GM12878 (cell line): ENCODE measurements at regions of chr11 and their contacts with region 1.

Region 1: GRCh38 chr11:95150946-95151684 is 61.5 kb downstream of the ENDOD1 start:
- DNase-seq: peak; percentile 77
- ATAC-seq: peak; percentile 89
- H3K4me3 ChIP-seq: peak overlapping the region; percentile 80
- H3K27ac ChIP-seq: peak overlapping the region; percentile 56
- H3K4me1 ChIP-seq: peaks cover 2% of the 10 kb centered on the region; the same call in 1 of the 2 replicates
- H3K27me3 ChIP-seq: no peaks in the 10 kb centered on the region
- CTCF ChIP-seq: peak; percentile 79 to 97 (median 87)
- EP300 ChIP-seq: no peak
- POLR2A ChIP-seq: peak; percentile 75
- RAD21 ChIP-seq: peak; percentile 38; the same call in 1 of the 2 replicates

Region 2: GRCh38 chr11:95028357-95028756 is 122.8 kb before region 1 on chr11:
- CTCF ChIA-PET with region 1: no interaction called
- POLR2A ChIA-PET with region 1: no interaction called
- RAD21 ChIA-PET with region 1: no interaction called
- SMC1A ChIA-PET with region 1: no interaction called
- in situ Hi-C with region 1: no loop called
- intact Hi-C with region 1: no loop called
- DNase-seq: no peak
- ATAC-seq: no peak
- H3K4me3 ChIP-seq: no peak overlapping the region
- H3K27ac ChIP-seq: no peak overlapping the region
- H3K4me1 ChIP-seq: no peaks in the 10 kb centered on the region
- H3K27me3 ChIP-seq: no peaks in the 10 kb centered on the region; a peak in 2 of 4 replicates
- CTCF ChIP-seq: no peak
- EP300 ChIP-seq: no peak
- POLR2A ChIP-seq: no peak
- RAD21 ChIP-seq: no peak

Region 3: DNA sequence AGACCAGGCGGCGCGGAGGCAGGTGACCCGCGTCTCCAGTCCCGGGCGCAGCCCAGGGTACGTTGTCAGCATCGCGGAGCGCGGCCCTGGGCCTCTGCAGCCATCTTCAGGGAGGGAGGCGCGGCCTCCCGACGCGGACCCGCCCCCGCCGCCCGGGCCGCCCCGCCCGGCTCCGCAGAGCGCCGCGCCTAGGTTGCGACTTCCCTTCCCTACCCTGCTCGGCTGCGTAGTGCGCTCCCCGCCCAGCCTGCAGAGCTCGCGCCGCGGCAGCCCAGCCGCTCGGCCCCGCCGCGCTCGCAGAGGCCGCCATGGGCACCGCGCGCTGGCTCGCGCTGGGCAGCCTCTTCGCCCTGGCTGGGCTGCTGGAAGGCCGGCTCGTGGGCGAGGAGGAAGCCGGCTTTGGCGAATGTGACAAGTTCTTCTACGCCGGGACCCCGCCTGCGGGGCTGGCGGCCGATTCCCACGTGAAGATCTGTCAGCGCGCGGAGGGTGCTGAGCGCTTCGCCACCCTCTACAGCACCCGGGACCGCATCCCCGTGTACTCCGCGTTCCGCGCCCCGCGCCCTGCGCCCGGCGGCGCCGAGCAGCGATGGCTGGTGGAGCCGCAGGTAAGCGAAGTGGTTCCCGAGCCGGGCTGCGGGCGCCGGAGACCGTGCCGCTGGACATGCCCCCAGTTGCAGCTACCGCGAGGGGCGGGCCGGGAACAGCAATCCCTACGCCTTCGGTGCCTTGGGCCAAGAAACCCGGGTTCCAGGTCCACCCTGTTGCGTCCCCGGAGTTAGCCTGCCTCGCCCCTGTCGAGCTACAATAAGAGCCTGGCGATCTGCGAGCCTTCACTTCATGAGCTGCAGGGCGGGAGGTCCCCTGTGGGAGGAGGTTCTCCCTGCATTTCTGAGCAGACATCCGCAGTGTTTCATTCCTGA is 61.2 kb before region 1 on chr11 and contains the start of gene ENDOD1:
- CTCF ChIA-PET with region 1: interaction called, 47 read pairs
- POLR2A ChIA-PET with region 1: interaction called, 4 read pairs
- RAD21 ChIA-PET with region 1: interaction called, 86 read pairs
- SMC1A ChIA-PET with region 1: interaction called, 9 read pairs
- in situ Hi-C with region 1: no loop called
- intact Hi-C with region 1: loop called (anchors 2 kb)
- DNase-seq: no peak
- ATAC-seq: peak; percentile 93
- H3K4me3 ChIP-seq: peak within 1 kb of the TSS; percentile 94
- H3K27ac ChIP-seq: peak within 1 kb of the TSS; percentile 84
- H3K4me1 ChIP-seq: peaks cover 27% of the 10 kb centered on the region
- H3K27me3 ChIP-seq: no peaks in the 10 kb centered on the region
- CTCF ChIP-seq: peak in 1 of 3 experiments; percentile 9; a peak in 1 of 6 replicates
- EP300 ChIP-seq: no peak
- POLR2A ChIP-seq: peak; percentile 93
- RAD21 ChIP-seq: no peak
- polyA plus RNA-seq, gene ENDOD1: 6.0 to 6.4 TPM

Region 4: DNA sequence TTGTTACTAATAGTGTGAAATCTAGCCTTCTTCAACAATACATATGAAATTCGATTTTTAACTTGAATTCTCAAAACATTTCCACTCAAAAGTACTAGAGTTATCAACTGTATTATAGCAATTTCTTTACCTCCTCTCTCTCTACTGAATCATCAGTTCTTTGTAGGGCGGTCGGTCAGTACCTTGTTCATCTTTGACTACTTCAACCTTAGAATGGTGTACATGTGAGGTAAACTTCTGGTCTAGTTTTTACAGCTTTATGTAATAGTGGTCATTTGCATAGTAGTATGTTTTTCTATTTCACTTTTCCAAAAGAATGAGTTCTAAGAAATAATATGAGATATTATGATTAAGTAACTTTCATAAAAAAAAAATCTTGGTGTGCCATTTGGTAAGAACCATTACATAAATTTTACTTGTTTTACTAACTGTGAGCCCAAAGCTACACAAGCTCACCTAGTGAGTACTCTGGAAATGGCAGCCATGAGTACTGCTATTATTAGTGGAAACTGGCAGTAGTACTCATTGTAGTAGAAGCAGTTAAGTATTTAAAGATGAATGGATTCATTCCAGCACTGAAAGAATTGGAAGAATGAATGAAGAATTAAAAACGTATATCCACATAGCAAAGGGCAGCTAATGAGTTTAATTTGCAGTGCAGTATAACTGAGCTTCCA is 49.8 kb after region 1 on chr11:
- CTCF ChIA-PET with region 1: interaction called, 5 read pairs
- POLR2A ChIA-PET with region 1: no interaction called
- RAD21 ChIA-PET with region 1: interaction called, 3 read pairs
- SMC1A ChIA-PET with region 1: interaction called, 13 read pairs
- in situ Hi-C with region 1: no loop called
- intact Hi-C with region 1: no loop called
- DNase-seq: no peak
- ATAC-seq: 0 out of 3 replicates have a peak, but pooled peaks have one; percentile 24
- H3K4me3 ChIP-seq: no peak overlapping the region
- H3K27ac ChIP-seq: no peak overlapping the region
- H3K4me1 ChIP-seq: no peaks in the 10 kb centered on the region
- H3K27me3 ChIP-seq: no peaks in the 10 kb centered on the region; a peak in 1 of 4 replicates
- CTCF ChIP-seq: no peak
- EP300 ChIP-seq: no peak
- POLR2A ChIP-seq: no peak
- RAD21 ChIP-seq: no peak

Region 5: GRCh38 chr11:95296621-95297025 is 145.5 kb after region 1 on chr11:
- CTCF ChIA-PET with region 1: interaction called, 22 read pairs
- POLR2A ChIA-PET with region 1: no interaction called
- RAD21 ChIA-PET with region 1: interaction called, 8 read pairs
- SMC1A ChIA-PET with region 1: interaction called, 6 read pairs
- in situ Hi-C with region 1: no loop called
- intact Hi-C with region 1: loop called (anchors 5 kb)
- DNase-seq: peak; percentile 39
- ATAC-seq: peak; percentile 97
- H3K4me3 ChIP-seq: peak overlapping the region; percentile 24; the same call in 1 of the 2 replicates
- H3K27ac ChIP-seq: no peak overlapping the region
- H3K4me1 ChIP-seq: peaks cover 15% of the 10 kb centered on the region; the same call in 1 of the 2 replicates
- H3K27me3 ChIP-seq: no peaks in the 10 kb centered on the region; a peak in 4 of 4 replicates
- CTCF ChIP-seq: no peak
- EP300 ChIP-seq: no peak; a peak in 1 of 4 replicates
- POLR2A ChIP-seq: no peak
- RAD21 ChIP-seq: peak; percentile 9; the same call in 1 of the 2 replicates

Region 6: DNA sequence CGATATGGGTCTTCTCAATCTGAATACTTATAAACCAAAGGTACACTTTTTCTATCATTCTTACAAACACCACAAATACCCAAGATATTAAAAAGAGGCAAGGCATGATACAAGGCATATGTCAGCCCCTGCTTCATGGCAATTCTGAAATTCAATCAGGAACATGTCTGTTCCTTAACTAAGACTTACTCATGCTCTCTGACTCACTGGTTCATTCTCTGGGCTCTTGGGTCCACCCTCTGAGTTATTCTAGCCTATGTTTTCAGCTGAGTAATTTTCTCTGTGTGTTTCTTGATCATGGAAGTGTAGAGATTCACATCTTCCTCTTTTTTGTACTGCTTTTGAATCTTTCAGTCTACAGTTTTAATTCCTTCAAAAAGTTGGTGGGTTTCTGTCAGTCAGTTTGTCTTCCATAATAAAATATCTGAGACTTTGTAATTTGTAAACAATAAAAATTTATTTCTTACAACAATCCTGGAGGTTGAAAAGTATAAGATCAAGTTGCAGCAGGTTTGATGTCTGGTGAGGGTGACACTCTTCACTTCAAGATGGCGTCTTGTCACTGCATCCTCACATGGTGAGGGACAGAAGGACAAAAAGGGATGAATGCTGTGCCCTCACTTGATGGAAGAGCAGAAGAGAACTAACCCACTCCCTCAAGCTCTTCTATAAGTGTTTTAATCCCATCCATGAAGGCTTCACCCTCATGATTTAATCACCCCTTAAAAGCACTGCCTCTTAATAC is 426.8 kb after region 1 on chr11:
- CTCF ChIA-PET with region 1: interaction called, 7 read pairs
- POLR2A ChIA-PET with region 1: no interaction called
- RAD21 ChIA-PET with region 1: interaction called, 5 read pairs
- SMC1A ChIA-PET with region 1: interaction called, 6 read pairs
- in situ Hi-C with region 1: no loop called
- intact Hi-C with region 1: loop called (anchors 5 kb)
- DNase-seq: no peak
- ATAC-seq: peak; percentile 85
- H3K4me3 ChIP-seq: no peak overlapping the region
- H3K27ac ChIP-seq: no peak overlapping the region
- H3K4me1 ChIP-seq: no peaks in the 10 kb centered on the region
- H3K27me3 ChIP-seq: no peaks in the 10 kb centered on the region
- CTCF ChIP-seq: peak; percentile 10 to 23 (median 11); a peak in 2 of 6 replicates
- EP300 ChIP-seq: no peak
- POLR2A ChIP-seq: no peak
- RAD21 ChIP-seq: peak; percentile 45; the same call in 1 of the 2 replicates

Region 7: DNA sequence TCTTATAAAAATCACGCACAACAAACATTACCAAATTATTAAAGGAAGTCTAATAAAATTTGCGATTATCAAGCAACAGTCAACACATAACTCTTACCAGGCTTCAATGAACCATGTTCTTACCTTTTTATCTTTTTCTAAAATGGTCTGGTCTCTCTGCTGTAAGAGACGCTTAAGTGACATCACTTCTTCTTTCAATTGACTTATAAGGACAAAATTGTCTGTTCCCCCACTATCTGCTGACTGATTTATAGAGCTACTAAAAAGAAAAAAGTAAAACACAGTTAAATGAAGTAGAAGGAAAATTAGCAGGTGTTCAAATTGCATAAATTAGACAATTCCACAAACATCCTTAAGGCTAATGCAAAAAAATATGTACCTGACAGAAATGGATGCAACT is 627.6 kb after region 1 on chr11:
- CTCF ChIA-PET with region 1: interaction called, 11 read pairs
- POLR2A ChIA-PET with region 1: no interaction called
- RAD21 ChIA-PET with region 1: interaction called, 6 read pairs
- SMC1A ChIA-PET with region 1: interaction called, 14 read pairs
- in situ Hi-C with region 1: no loop called
- intact Hi-C with region 1: no loop called
- DNase-seq: no peak
- ATAC-seq: peak; percentile 77
- H3K4me3 ChIP-seq: no peak overlapping the region
- H3K27ac ChIP-seq: no peak overlapping the region
- H3K4me1 ChIP-seq: peaks cover 6% of the 10 kb centered on the region; the same call in 1 of the 2 replicates
- H3K27me3 ChIP-seq: no peaks in the 10 kb centered on the region
- CTCF ChIP-seq: no peak
- EP300 ChIP-seq: no peak
- POLR2A ChIP-seq: no peak
- RAD21 ChIP-seq: no peak

Region 8: DNA sequence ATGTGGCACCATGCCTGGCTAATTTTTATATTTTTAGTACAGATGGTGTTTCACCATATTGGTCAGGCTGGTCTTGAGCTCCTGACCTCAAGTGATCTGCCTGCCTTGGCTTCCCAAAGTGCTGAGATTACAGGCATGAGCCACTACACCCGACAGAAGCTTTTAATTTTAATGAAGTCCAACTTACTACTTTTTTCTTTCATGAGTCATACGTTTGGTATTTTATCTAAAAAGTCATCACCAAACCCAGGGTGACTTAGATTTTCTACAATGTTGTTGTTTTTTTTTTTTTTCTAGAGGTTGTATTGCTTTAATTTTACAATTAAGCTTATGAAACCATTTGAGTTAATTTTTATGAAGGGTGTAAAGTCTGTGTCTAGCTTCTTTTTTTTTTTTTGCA is 1273.6 kb after region 1 on chr11:
- CTCF ChIA-PET with region 1: interaction called, 13 read pairs
- POLR2A ChIA-PET with region 1: interaction called, 3 read pairs
- RAD21 ChIA-PET with region 1: interaction called, 4 read pairs
- SMC1A ChIA-PET with region 1: interaction called, 8 read pairs
- in situ Hi-C with region 1: loop called (anchors 5 kb)
- intact Hi-C with region 1: loop called (anchors 2 kb)
- DNase-seq: no peak
- ATAC-seq: no peak
- H3K4me3 ChIP-seq: no peak overlapping the region
- H3K27ac ChIP-seq: no peak overlapping the region
- H3K4me1 ChIP-seq: no peaks in the 10 kb centered on the region
- H3K27me3 ChIP-seq: no peaks in the 10 kb centered on the region
- CTCF ChIP-seq: no peak
- EP300 ChIP-seq: no peak
- POLR2A ChIP-seq: no peak
- RAD21 ChIP-seq: no peak